Mucosa of descending colon (tissue), 3 donors: ENCODE measurements at regions of chr7 and their contacts with region 1.

Region 1: GRCh38 chr7:116258734-116259133 is 48.4 kb downstream of the TES start:
- DNase-seq: peak in 1 of 3 donors; percentile 43
- ATAC-seq: peak; percentile 65
- H3K4me3 ChIP-seq: no peak overlapping the region
- H3K4me1 ChIP-seq: no peaks in the 10 kb centered on the region
- CTCF ChIP-seq: peak; percentile 53

Region 2: GRCh38 chr7:115328018-115328417 is 930.7 kb before region 1 on chr7:
- intact Hi-C with region 1: no loop called
- DNase-seq: no peak
- ATAC-seq: no peak
- H3K4me3 ChIP-seq: no peak overlapping the region
- H3K4me1 ChIP-seq: no peaks in the 10 kb centered on the region
- CTCF ChIP-seq: no peak

Region 3: GRCh38 chr7:116340943-116341907 is 82.5 kb after region 1 on chr7:
- intact Hi-C with region 1: no loop called
- DNase-seq: no peak
- ATAC-seq: no peak
- H3K4me3 ChIP-seq: no peak overlapping the region
- H3K4me1 ChIP-seq: no peaks in the 10 kb centered on the region
- CTCF ChIP-seq: no peak

Region 4: DNA sequence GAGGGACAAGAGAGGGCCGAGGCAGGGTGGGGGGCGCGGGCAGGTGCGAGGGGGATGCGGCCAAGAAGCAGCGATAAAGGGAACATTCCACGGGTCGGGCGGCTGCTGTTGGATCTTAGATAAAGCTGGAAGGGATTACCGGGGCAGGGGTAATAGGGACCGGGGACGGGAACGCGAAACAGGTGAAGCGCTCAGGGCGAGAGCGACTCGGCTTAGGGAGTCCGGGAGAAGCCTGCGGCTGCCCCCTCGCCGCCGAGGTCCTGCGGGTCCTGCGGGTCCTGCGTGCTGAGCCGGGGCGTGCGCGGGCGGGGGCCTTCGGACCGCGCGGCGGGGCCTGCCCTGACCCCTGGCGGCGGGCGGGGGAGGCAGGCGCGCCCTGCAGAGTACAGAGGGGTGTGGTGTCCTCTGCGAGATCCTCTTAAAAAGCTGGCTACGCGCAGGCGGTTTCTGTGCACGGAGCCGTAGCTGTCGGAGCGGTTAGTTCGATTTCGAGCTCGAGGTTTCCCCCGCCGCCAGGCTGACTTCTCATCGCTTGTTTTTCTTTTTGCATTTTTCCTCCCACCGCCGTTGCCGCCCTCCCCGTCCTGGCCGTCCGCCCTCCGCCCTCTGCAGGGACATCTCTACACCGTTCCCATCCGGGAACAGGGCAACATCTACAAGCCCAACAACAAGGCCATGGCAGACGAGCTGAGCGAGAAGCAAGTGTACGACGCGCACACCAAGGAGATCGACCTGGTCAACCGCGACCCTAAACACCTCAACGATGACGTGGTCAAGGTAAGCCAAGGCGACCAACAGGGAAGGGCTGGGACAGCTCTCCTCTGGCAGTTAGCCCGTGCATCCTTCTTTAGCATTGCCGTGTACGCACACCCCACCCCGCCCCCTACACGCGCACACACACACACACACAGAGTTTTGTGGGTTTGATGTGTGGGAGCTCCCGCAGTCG is 267.5 kb after region 1 on chr7:
- intact Hi-C with region 1: loop called in 1 of 2 experiments (anchors 10 kb)
- DNase-seq: peak; percentile 67 to 83 (median 76)
- ATAC-seq: peak; percentile 93
- H3K4me3 ChIP-seq: peak overlapping the region; percentile 14
- H3K4me1 ChIP-seq: peaks cover 13% of the 10 kb centered on the region
- CTCF ChIP-seq: peak; percentile 88

Region 5: GRCh38 chr7:116588641-116589594 is 330.2 kb after region 1 on chr7:
- intact Hi-C with region 1: loop called (anchors 5 kb)
- DNase-seq: peak in 1 of 3 donors; percentile 22
- ATAC-seq: peak; percentile 27
- H3K4me3 ChIP-seq: no peak overlapping the region
- H3K4me1 ChIP-seq: peaks cover 12% of the 10 kb centered on the region
- CTCF ChIP-seq: peak; percentile 29